HCT116 (cell line): ENCODE measurements at regions of chr10 and their contacts with region 1.

Region 1: DNA sequence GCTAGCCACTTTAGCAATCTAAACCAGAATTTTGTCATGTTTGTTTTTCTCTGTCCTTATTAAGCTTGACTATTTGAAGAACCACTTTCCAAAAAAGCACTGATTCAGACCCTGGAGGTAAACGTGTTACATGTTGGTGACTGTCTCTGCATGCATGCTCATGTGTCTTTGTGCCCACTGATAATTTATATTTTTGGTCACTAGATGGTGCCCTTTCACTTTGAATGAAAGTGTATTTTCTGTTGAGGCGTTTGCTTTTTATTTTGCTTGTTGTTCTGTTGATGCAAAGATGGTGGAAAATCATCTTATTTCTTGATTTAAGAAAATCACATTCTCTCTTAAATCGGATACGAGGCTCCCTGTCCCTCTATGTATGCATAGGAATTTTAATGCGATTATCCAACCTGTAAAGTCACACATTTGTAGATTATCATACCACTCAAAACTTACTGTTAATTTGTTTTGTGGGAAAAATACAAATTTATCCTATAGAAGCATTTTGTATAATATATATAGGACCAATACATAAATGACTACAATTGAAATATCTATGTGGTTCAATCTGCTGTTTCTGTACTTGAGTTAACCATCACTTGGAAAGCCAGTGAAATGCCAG is 269.3 kb downstream of the BICC1 start:
- DNase-seq: peak; percentile 47
- ATAC-seq: peak; percentile 82
- H3K4me3 ChIP-seq: no peak overlapping the region
- H3K27ac ChIP-seq: no peak overlapping the region
- H3K4me1 ChIP-seq: no peaks in the 10 kb centered on the region
- H3K27me3 ChIP-seq: no peaks in the 10 kb centered on the region
- CTCF ChIP-seq: peak; percentile 40 to 74 (median 60); a peak in 4 of 6 replicates
- POLR2A ChIP-seq: no peak
- RAD21 ChIP-seq: peak; percentile 79

Region 2: DNA sequence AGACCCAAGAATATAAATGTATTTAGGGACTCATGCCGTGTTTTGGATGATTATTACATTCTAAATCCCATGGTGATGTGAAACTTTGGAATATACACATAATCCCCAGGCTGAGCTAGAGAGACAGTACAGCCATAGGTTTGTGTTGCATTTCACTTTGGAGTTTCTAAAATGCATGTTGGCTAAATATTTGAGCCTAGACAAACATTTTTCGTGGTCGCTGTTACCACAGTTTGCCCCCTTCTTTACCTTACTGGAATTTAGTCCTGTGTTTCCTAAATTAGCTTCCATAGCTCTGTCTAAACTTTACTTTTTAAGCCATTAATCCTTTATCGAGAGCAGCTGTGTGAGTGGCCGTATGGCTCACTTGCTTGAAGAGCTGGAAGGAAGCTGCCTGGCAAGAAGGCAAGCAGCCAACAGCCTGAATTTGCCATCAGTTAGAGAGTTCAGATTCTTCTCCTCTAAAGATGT is 77.3 kb before region 1 on chr10:
- CTCF ChIA-PET with region 1: no interaction called
- POLR2A ChIA-PET with region 1: no interaction called
- RAD21 ChIA-PET with region 1: no interaction called
- intact Hi-C with region 1: no loop called
- DNase-seq: no peak
- ATAC-seq: no peak
- H3K4me3 ChIP-seq: no peak overlapping the region
- H3K27ac ChIP-seq: no peak overlapping the region
- H3K4me1 ChIP-seq: no peaks in the 10 kb centered on the region
- H3K27me3 ChIP-seq: no peaks in the 10 kb centered on the region
- CTCF ChIP-seq: no peak
- POLR2A ChIP-seq: no peak
- RAD21 ChIP-seq: no peak

Region 3: GRCh38 chr10:58765910-58766309 is 16.1 kb before region 1 on chr10:
- CTCF ChIA-PET with region 1: no interaction called
- POLR2A ChIA-PET with region 1: no interaction called
- RAD21 ChIA-PET with region 1: no interaction called
- intact Hi-C with region 1: no loop called
- DNase-seq: no peak
- ATAC-seq: no peak
- H3K4me3 ChIP-seq: no peak overlapping the region
- H3K27ac ChIP-seq: no peak overlapping the region
- H3K4me1 ChIP-seq: no peaks in the 10 kb centered on the region
- H3K27me3 ChIP-seq: no peaks in the 10 kb centered on the region
- CTCF ChIP-seq: no peak
- POLR2A ChIP-seq: no peak
- RAD21 ChIP-seq: no peak

Region 4: GRCh38 chr10:59181668-59182067 is 399.7 kb after region 1 on chr10:
- CTCF ChIA-PET with region 1: no interaction called
- POLR2A ChIA-PET with region 1: no interaction called
- RAD21 ChIA-PET with region 1: no interaction called
- intact Hi-C with region 1: loop called (anchors 1 kb)
- DNase-seq: peak; percentile 50
- ATAC-seq: peak; percentile 91
- H3K4me3 ChIP-seq: no peak overlapping the region
- H3K27ac ChIP-seq: no peak overlapping the region
- H3K4me1 ChIP-seq: no peaks in the 10 kb centered on the region
- H3K27me3 ChIP-seq: no peaks in the 10 kb centered on the region
- CTCF ChIP-seq: peak; percentile 46 to 69 (median 55); a peak in 5 of 6 replicates
- POLR2A ChIP-seq: no peak
- RAD21 ChIP-seq: peak; percentile 69

Region 5: GRCh38 chr10:59234816-59235429 is 452.9 kb after region 1 on chr10:
- CTCF ChIA-PET with region 1: no interaction called
- POLR2A ChIA-PET with region 1: no interaction called
- RAD21 ChIA-PET with region 1: no interaction called
- intact Hi-C with region 1: loop called (anchors 2 kb)
- DNase-seq: peak; percentile 44
- ATAC-seq: peak; percentile 66
- H3K4me3 ChIP-seq: no peak overlapping the region
- H3K27ac ChIP-seq: no peak overlapping the region
- H3K4me1 ChIP-seq: no peaks in the 10 kb centered on the region; a peak in 1 of 4 replicates
- H3K27me3 ChIP-seq: no peaks in the 10 kb centered on the region
- CTCF ChIP-seq: peak; percentile 37 to 75 (median 70); a peak in 5 of 6 replicates
- POLR2A ChIP-seq: no peak
- RAD21 ChIP-seq: peak; percentile 52

Region 6: DNA sequence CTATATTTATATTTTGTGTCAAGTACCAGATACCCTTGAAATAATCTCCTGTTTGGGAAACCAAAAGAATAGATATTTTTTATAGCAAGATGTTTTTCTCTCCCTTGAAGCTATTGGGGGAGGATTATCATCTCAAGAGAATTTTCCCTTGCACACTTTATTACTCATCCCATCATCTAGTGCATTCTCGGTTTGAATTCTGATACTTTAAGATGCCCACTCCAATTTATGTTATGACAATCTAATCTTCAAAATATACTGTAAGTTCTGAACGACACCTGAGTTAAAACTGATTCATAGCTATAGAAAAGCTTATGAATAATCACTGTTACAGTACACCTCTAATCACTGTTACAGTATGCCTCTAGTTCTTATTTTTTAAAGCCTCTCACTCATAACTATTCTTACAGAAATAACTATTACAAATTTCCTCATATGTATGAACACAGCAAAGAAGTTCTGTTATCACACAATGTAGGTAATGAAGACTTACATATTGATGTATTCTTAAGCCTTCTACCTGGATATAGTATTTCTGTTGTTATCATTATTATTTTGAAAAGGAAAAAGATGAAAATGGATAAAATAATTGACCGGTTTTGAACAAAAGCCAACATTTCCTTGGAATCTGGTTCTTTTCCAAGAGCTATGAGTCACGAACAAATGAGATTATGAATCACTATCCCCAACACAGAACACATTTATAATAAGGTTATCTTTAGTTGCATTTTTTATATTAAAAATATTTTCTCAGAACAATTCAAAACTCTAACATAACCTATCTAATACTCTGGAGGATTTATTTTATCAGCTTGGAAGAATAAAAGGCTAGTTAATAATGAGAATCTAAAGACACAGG is 652.7 kb after region 1 on chr10:
- CTCF ChIA-PET with region 1: no interaction called
- POLR2A ChIA-PET with region 1: no interaction called
- RAD21 ChIA-PET with region 1: no interaction called
- intact Hi-C with region 1: no loop called
- DNase-seq: no peak
- ATAC-seq: no peak
- H3K4me3 ChIP-seq: no peak overlapping the region
- H3K27ac ChIP-seq: no peak overlapping the region
- H3K4me1 ChIP-seq: peaks cover 2 to 3% of the 10 kb centered on the region in 2 experiments; a peak in 2 of 4 replicates
- H3K27me3 ChIP-seq: peaks cover 20% of the 10 kb centered on the region; the same call in 1 of the 2 replicates
- CTCF ChIP-seq: no peak
- POLR2A ChIP-seq: no peak
- RAD21 ChIP-seq: no peak

Region 7: GRCh38 chr10:59465088-59465487 is 683.1 kb after region 1 on chr10:
- CTCF ChIA-PET with region 1: no interaction called
- POLR2A ChIA-PET with region 1: no interaction called
- RAD21 ChIA-PET with region 1: no interaction called
- intact Hi-C with region 1: loop called (anchors 10 kb)
- DNase-seq: no peak
- ATAC-seq: peak; percentile 60; the same call in 1 of the 2 replicates
- H3K4me3 ChIP-seq: no peak overlapping the region
- H3K27ac ChIP-seq: no peak overlapping the region
- H3K4me1 ChIP-seq: no peaks in the 10 kb centered on the region
- H3K27me3 ChIP-seq: 0 out of 2 replicates have a peak, but pooled peaks cover 7% of the 10 kb centered on the region
- CTCF ChIP-seq: peak; percentile 24 to 36 (median 33); a peak in 3 of 6 replicates
- POLR2A ChIP-seq: no peak
- RAD21 ChIP-seq: peak; percentile 51

Region 8: GRCh38 chr10:59580026-59580863 is 798.3 kb after region 1 on chr10:
- CTCF ChIA-PET with region 1: interaction called, 3 read pairs
- POLR2A ChIA-PET with region 1: no interaction called
- RAD21 ChIA-PET with region 1: no interaction called
- intact Hi-C with region 1: loop called (anchors 1 kb)
- DNase-seq: peak; percentile 32
- ATAC-seq: peak; percentile 67
- H3K4me3 ChIP-seq: no peak overlapping the region
- H3K27ac ChIP-seq: no peak overlapping the region
- H3K4me1 ChIP-seq: no peaks in the 10 kb centered on the region
- H3K27me3 ChIP-seq: peaks cover 17% of the 10 kb centered on the region; the same call in 1 of the 2 replicates
- CTCF ChIP-seq: peak; percentile 35 to 61 (median 41); a peak in 4 of 6 replicates
- POLR2A ChIP-seq: no peak
- RAD21 ChIP-seq: peak; percentile 66

Region 9: DNA sequence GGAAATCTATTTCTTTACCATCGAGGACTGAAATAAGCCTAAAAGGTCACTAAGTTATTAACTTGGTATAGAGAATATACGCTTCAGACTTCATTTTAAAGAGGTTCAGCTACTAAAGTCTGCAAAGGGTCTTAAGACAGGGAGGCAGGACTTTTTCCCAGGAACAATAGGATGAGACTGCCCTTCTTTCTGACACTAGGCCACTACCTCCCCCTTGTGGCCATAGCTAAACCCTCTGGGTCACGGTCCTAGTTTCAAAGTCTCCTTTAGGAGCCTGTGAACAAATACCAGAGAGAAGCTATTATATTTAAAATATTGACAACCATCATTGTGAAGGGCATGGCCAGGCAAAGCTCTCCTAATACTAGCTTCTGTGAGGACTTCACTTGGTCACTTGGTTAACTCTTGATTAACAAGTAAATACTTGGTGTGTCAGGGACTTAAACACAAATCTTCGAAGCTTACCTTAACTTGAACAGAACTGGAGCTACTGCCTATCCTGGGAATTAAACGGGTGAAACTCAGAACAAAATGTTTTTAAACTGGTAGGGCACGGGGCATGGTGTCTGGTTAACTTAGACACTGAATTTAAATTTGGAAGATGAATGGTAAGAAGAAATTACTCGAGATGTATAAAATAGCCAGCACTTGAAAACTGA is 1048.7 kb after region 1 on chr10:
- CTCF ChIA-PET with region 1: no interaction called
- POLR2A ChIA-PET with region 1: no interaction called
- RAD21 ChIA-PET with region 1: no interaction called
- intact Hi-C with region 1: loop called (anchors 5 kb)
- DNase-seq: peak; percentile 34
- ATAC-seq: peak; percentile 90
- H3K4me3 ChIP-seq: no peak overlapping the region
- H3K27ac ChIP-seq: no peak overlapping the region
- H3K4me1 ChIP-seq: no peaks in the 10 kb centered on the region
- H3K27me3 ChIP-seq: no peaks in the 10 kb centered on the region
- CTCF ChIP-seq: peak; percentile 59 to 92 (median 86); a peak in 5 of 6 replicates
- POLR2A ChIP-seq: no peak
- RAD21 ChIP-seq: peak; percentile 56

Region 10: DNA sequence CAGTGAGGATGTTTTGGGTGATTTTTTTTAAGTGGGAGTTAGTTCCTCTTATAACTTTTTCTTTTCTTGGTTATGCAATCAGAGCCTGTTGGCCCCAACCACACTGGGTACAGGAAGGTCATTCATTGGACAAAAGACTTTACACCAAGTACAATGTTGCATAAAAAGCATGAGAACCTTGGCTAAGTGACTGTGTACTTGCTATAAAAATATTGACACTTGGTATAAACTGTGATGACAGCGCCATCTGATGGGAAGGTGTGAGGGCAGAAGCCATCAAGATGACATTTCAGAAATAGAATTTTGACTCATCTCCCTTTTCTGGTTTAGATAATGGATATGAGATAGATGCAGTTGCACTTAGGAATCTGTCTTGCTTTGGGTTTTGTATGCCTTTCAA is 1250.7 kb after region 1 on chr10:
- CTCF ChIA-PET with region 1: no interaction called
- POLR2A ChIA-PET with region 1: no interaction called
- RAD21 ChIA-PET with region 1: no interaction called
- intact Hi-C with region 1: loop called (anchors 5 kb)
- DNase-seq: peak; percentile 47
- ATAC-seq: peak; percentile 85
- H3K4me3 ChIP-seq: no peak overlapping the region
- H3K27ac ChIP-seq: no peak overlapping the region
- H3K4me1 ChIP-seq: no peaks in the 10 kb centered on the region
- H3K27me3 ChIP-seq: no peaks in the 10 kb centered on the region
- CTCF ChIP-seq: peak; percentile 68 to 87 (median 75)
- POLR2A ChIP-seq: no peak
- RAD21 ChIP-seq: peak; percentile 91